Endothelial cell of umbilical vein (primary cell): ENCODE measurements at regions of chr12 and their contacts with region 1.

Region 1: DNA sequence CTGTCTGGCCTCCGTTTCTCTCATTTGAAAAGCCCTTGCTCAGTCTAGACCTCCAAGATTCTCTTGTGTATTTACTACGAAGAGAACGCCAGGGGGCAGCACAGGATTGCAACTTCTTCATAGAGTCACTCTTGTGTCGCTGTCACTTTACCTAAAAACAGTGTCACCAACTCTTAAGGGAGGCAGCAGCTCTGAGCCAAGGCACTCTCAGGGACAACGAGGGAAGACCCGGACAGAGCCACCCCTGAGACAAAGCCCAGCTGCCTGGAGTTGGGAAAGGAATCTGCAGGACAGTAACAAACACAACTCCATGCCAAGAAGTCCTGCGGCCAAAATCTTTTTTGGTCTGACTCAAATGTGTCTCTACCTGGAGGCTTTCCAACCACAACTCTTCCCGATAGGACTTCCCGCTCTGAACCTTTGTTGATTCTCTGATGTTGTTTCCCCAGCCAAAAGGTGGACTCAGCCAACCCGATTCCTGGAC is 9.6 kb upstream of the RPAP3 start:
- DNase-seq: peak; percentile 70
- H3K4me3 ChIP-seq: no peak overlapping the region
- H3K27ac ChIP-seq: no peak overlapping the region
- H3K4me1 ChIP-seq: peaks cover 7% of the 10 kb centered on the region
- H3K27me3 ChIP-seq: no peaks in the 10 kb centered on the region
- CTCF ChIP-seq: peak; percentile 63 to 78
- POLR2A ChIP-seq: no peak

Region 2: DNA sequence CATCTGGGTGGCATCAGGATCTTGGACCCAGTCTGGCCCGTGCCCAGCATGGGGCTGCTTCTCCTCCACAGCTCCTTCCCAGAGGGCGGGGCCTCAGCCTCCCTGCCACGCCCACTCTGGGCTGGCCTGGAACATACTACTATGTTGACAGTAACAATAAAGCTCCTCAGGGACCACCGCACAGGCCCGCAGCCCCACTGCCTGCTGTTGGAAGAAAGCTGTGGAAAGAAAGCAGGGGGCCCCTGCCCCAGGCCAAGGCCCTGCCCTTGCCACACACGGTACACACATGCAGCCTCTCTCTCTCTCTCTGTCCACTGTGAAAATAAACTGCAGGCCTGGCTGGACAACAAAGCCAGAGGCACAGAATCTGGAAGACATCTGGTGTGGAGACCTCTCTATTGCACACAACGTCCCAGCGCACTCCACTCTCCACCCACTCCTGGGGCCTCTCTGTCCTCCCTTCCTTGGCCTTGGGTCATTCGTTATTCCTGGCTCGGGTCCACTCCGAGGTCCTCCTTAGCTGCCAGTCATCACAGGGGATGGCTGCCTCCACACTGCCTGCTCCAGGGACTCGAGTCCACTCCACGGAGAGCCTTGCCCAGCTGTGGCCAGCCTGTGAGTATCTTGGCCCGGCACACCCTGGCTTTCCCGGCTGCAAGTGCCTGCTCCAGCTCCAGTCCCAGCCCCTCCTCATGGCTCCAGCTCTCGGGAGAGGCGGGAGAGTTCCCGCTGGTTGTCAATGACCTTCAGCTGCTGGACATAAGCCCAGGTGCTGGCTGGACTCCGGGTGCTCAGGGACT is 21.6 kb after region 1 on chr12:
- CTCF ChIA-PET with region 1: interaction called, 44 read pairs
- POLR2A ChIA-PET with region 1: no interaction called
- dilution Hi-C with region 1: no loop called
- intact Hi-C with region 1: loop called (anchors 1 kb)
- DNase-seq: peak; percentile 14
- H3K4me3 ChIP-seq: no peak overlapping the region
- H3K27ac ChIP-seq: no peak overlapping the region
- H3K4me1 ChIP-seq: peaks cover 14% of the 10 kb centered on the region
- H3K27me3 ChIP-seq: no peaks in the 10 kb centered on the region
- CTCF ChIP-seq: no peak
- POLR2A ChIP-seq: no peak

Region 3: DNA sequence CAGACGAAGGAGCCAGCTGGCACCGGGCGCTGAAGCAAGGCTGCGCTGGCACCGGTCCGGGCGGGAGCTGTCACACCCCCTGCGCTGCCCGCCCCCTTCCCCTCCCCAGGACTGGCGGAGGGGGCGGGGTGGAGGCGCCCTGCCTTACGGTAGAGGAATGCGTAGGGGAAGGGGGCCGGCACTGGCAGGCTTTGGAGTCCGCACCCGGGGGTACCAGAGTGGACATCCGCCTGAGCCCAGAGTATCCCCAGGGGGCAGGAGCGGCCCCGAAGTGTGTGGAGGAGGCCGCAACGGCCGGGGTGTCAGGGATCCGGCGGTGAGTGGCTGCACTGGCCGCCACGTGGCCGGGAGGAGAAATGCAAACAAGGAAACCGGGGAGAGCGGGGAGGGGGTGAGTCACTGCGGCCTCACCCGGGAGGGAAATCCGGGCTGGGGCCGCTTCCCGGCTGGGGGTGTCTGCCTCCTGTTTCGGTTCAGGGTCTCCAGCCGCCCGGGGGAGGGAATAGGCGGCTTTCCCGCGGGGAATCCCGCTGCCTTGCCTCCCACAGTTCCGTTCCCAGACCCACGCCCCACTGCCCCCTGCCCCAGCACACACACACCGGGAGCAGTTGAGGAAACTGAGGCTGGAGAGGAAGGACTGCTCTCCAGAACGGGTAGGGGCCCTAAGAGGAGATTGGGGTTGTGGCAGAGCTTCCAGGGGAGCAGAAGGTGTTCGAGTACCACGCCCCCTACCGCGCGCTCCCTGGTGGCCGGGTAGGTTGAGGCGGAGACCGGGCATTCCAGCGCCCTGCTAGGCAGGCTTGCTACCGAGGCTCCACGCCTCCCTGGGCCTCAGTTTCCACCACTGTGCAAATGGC is 43.6 kb after region 1 on chr12 and contains the start of gene RAPGEF3:
- CTCF ChIA-PET with region 1: interaction called, 23 read pairs
- POLR2A ChIA-PET with region 1: no interaction called
- dilution Hi-C with region 1: no loop called
- intact Hi-C with region 1: no loop called
- DNase-seq: peak; percentile 94
- H3K4me3 ChIP-seq: peak within 1 kb of the TSS; percentile 50 to 71 (median 62)
- H3K27ac ChIP-seq: peak within 1 kb of the TSS; percentile 95
- H3K4me1 ChIP-seq: peaks cover 52% of the 10 kb centered on the region
- H3K27me3 ChIP-seq: no peaks in the 10 kb centered on the region
- CTCF ChIP-seq: peak; percentile 43 to 70
- POLR2A ChIP-seq: peak; percentile 67
- total RNA-seq, gene RAPGEF3: 53.6 and 55.1 TPM in 2 replicates

Region 4: DNA sequence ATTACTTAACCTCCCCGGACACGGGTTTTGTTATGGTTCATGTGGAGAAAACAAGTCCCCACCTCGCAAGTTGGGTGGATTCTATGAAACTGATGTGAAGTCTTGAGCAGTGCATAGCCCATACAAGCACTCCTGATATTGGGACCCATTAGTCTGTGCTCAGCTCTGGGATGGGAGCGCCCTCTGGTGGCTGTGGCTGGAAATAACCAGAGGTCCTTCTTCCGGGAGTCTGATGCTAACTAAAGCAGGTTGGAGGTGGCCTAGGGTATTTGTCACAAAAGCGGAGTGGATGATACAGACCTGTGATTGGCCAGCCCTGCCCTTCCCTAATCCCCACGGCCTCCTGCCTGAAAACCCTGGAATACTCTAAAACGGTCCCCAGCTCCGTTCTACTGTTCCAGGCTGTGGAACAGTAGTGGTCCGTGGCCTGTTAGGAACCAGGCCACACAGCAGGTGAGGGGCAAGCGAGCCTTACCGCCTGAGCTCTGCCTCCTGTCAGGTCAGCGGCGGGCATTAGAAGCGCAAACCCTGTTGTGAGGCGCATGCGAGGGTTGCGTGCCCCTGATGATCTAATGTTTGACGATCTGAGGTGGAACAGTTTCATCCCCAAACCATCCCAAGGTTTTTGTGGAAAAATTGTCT is 64.0 kb after region 1 on chr12:
- CTCF ChIA-PET with region 1: interaction called, 55 read pairs
- POLR2A ChIA-PET with region 1: interaction called, 5 read pairs
- dilution Hi-C with region 1: no loop called
- intact Hi-C with region 1: loop called (anchors 1 kb)
- DNase-seq: peak; percentile 88
- H3K4me3 ChIP-seq: no peak overlapping the region
- H3K27ac ChIP-seq: no peak overlapping the region
- H3K4me1 ChIP-seq: peaks cover 32% of the 10 kb centered on the region
- H3K27me3 ChIP-seq: no peaks in the 10 kb centered on the region
- CTCF ChIP-seq: peak; percentile 89 to 96
- POLR2A ChIP-seq: no peak

Region 5: GRCh38 chr12:47963340-47964040 is 248.1 kb after region 1 on chr12 and contains the start of gene TMEM106C:
- CTCF ChIA-PET with region 1: no interaction called
- POLR2A ChIA-PET with region 1: no interaction called
- dilution Hi-C with region 1: no loop called
- intact Hi-C with region 1: loop called (anchors 1 kb)
- DNase-seq: peak; percentile 93
- H3K4me3 ChIP-seq: peak within 1 kb of the TSS; percentile 59 to 87 (median 70)
- H3K27ac ChIP-seq: no peak within 1 kb of the TSS
- H3K4me1 ChIP-seq: peaks cover 7% of the 10 kb centered on the region
- H3K27me3 ChIP-seq: peaks cover under 1 to 4% of the 10 kb centered on the region in 2 experiments
- CTCF ChIP-seq: peak; percentile 98 to 99
- POLR2A ChIP-seq: peak; percentile 25
- total RNA-seq, gene TMEM106C: 67.7 and 84.4 TPM in 2 replicates